ENCODE measurements at regions of chr2 and their contacts with region 1.

Region 1: DNA sequence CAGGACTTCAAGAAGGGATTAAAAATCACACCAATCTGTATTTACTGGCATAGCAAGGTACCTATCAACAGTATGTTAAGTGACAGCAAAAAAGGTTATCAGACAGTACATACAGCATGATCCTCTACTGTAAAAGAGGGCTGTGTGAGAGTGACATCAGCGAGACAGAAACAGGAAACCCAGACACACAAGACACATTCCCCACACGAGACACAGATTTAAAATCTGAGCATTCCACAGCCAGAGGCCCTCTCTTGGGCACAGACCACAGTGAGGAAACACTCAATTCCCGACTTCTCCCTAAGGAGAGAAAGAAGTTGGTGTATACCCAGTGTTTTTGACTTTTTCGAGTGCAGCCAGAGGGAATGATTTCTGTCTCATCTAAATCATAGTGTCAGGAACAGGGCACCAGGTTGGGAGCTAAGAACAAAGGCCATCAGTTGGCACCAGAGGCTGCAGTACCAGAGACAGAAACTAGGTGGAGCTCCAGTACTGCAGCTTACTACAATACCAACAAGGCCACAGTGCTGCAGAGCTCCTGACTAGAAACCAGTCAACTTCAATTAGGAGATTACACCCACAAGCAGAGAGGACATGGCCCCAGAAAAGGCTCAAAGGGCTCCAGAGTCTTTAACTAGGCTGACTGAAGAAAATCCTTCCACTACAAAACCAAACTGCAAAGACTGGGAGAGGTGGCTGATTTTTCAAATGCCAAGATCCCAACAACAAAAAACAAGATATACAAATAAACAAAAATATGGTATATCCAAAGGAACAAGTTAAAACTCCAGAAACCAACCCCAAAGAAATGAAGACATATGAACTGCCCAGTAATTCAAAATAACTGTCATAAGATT is 41.0 kb downstream of the UNC50 start:
- DNase-seq: peak; percentile 36
- H3K27ac ChIP-seq: no peak overlapping the region
- CTCF ChIP-seq: peak; percentile 97

Region 2: DNA sequence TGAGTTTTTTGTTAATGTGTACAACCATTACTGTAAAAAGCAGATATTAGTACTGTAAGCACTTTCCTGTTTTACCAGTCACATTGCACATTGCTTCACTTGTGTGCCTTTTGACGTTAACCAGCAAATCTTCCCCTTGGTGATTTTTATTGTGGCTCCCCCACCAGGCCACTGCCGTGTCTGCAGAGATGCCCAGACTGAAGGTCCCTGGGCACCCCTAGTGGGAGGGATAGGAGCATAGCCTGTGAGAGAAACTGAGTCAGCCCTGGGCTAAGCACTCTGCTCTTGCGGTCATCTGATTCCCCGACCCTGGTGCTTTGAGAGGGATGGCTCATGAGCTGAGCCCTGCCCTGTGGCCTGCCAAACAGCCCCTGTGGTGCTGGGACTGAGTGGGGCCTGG is 131.3 kb before region 1 on chr2:
- CTCF ChIA-PET with region 1: no interaction called
- POLR2A ChIA-PET with region 1: no interaction called
- DNase-seq: no peak
- H3K27ac ChIP-seq: no peak overlapping the region
- CTCF ChIP-seq: no peak

Region 3: GRCh38 chr2:98664327-98664726 is 15.0 kb after region 1 on chr2:
- CTCF ChIA-PET with region 1: interaction called, 10 read pairs
- POLR2A ChIA-PET with region 1: no interaction called
- DNase-seq: peak; percentile 73
- H3K27ac ChIP-seq: no peak overlapping the region
- CTCF ChIP-seq: no peak

Region 4: DNA sequence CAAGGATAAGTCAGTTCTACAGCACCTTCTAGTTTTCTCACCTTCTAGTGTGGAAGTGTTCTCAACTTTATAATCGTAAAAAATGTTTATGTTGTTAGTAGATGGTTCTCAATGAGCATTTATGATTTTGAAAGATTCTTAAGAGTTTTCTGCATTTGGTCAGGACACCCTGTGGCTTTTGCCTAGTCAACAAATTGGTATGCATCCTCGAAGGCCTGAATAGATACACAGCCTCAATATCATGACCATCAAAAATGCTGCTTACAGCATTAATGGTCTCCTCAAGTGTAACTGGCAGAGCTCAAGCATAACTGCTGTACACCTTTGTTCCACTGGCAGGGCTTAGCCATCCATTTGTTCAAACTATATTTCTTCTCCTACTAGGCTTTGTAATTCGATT is 189.9 kb after region 1 on chr2:
- CTCF ChIA-PET with region 1: interaction called, 19 read pairs
- POLR2A ChIA-PET with region 1: no interaction called
- DNase-seq: no peak
- H3K27ac ChIP-seq: no peak overlapping the region
- CTCF ChIP-seq: no peak

Region 5: DNA sequence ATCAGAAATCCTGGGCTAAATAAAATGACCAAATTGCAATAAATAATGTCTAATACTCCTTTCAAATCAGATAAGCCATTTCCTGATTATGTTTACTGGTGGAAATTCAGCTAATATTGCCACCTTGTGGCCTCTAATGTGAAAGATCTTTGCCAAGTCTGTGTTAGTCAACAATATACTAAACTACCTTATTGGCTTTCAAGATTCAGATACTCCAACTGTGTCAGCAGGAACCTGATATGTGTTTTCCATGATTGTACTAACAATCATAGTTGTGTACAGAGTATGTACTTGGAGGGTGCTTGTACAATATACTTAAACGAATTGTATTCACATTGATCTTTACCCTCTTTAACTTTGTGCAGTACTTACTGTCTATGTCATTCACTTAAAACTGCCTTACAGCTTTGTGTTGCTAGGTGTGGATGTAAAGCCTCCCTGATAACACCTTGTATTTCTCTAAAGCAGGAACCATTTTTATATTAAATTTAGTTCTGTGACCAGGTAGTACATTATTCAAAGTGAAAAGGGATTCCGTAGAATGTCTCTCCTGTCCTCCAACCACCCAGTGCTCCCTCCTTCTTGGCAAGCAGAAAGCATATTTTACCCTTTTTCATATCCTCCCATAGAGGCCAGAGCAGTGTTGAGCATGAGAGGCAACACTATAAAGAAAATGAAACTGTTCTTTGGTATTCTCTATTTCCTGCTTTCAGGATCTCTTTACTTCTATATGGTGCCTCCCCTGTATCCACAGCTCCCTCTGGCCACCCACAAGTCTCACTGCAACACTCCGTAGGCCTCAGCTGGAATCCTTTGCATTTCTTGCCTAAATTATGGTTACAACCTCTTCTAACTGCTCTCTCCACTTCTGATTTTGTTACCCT is 417.0 kb after region 1 on chr2:
- CTCF ChIA-PET with region 1: interaction called, 39 read pairs
- POLR2A ChIA-PET with region 1: no interaction called
- DNase-seq: peak; percentile 50
- H3K27ac ChIP-seq: no peak overlapping the region
- CTCF ChIP-seq: peak; percentile 52

Region 6: GRCh38 chr2:99425022-99425421 is 775.7 kb after region 1 on chr2:
- CTCF ChIA-PET with region 1: no interaction called
- POLR2A ChIA-PET with region 1: no interaction called
- DNase-seq: peak; percentile 32
- H3K27ac ChIP-seq: no peak overlapping the region
- CTCF ChIP-seq: no peak

Measured in RWPE1 (cell line).